ENCODE measurements at regions of chr7 and their contacts with region 1.

Region 1: DNA sequence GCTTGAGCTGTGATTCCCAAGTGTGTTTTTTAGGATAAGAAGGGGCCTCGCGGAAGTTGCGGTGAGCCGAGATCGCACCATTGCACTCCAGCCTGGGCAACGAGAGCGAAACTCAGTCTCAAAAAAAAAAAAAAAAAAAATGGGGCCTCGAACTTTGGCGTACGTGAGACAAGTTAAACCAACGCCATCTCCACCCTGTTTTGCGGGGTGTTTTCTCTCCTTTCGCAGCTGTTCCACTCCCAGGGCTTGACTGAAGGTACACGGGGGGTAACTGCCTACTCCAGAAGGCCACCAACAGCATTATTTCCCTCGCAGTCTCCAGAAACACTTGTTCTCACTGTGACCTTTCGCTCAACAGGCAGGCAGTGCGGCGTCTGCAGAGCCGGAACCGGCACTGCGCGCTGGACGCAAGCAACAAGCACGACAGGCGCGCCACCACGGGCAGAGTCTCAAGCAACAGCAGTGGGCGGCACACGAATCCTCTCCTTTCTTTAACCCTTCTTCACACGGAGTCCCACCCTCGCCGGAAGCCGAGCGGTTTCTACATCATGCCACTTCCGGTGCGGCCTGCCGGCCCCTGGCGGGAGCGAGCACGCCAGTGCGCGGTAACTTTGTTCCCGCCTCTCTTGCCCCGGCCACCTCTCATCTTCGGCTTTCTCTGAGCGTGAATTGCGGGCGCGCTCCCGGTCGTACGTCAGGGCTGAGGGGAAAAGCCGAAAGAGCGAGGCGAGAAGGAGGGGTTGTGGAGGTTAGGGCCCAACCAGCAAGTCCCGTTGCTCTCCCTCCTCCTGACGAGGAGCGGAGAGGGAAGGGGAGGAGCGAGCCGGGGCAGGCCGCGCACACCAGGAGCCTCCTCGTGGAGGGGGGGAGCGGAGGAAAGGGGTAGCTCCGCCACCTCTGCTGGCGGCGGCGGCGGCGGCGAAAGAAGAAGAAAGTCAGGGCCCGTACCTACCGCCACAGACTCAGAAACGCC is 814 bp upstream of the CDK13 start:
- DNase-seq: peak; percentile 98 to 99
- H3K4me3 ChIP-seq: peak overlapping the region; percentile 98 to 100
- H3K27ac ChIP-seq: peak overlapping the region; percentile 100
- H3K4me1 ChIP-seq: peaks cover 4 to 15% of the 10 kb centered on the region in 2 donors
- H3K27me3 ChIP-seq: no peaks in the 10 kb centered on the region
- CTCF ChIP-seq: no peak

Region 2: GRCh38 chr7:39623018-39623731 is 326.1 kb before region 1 on chr7 and contains the start of gene RALA:
- intact Hi-C with region 1: loop called (anchors 10 kb)
- DNase-seq: peak; percentile 73 to 94
- H3K4me3 ChIP-seq: peak within 1 kb of the TSS; percentile 93 to 97
- H3K27ac ChIP-seq: peak within 1 kb of the TSS; percentile 81 to 92
- H3K4me1 ChIP-seq: peaks cover 9 to 11% of the 10 kb centered on the region in 2 donors
- H3K27me3 ChIP-seq: no peaks in the 10 kb centered on the region
- CTCF ChIP-seq: no peak
- total RNA-seq, gene RALA: 6.0 TPM

Region 3: GRCh38 chr7:39650676-39651075 is 298.6 kb before region 1 on chr7:
- intact Hi-C with region 1: no loop called
- DNase-seq: peak in 1 of 2 donors; percentile 67
- H3K4me3 ChIP-seq: no peak overlapping the region
- H3K27ac ChIP-seq: no peak overlapping the region
- H3K4me1 ChIP-seq: peaks cover 0 to 2% of the 10 kb centered on the region in 2 donors
- H3K27me3 ChIP-seq: no peaks in the 10 kb centered on the region
- CTCF ChIP-seq: no peak

Region 4: DNA sequence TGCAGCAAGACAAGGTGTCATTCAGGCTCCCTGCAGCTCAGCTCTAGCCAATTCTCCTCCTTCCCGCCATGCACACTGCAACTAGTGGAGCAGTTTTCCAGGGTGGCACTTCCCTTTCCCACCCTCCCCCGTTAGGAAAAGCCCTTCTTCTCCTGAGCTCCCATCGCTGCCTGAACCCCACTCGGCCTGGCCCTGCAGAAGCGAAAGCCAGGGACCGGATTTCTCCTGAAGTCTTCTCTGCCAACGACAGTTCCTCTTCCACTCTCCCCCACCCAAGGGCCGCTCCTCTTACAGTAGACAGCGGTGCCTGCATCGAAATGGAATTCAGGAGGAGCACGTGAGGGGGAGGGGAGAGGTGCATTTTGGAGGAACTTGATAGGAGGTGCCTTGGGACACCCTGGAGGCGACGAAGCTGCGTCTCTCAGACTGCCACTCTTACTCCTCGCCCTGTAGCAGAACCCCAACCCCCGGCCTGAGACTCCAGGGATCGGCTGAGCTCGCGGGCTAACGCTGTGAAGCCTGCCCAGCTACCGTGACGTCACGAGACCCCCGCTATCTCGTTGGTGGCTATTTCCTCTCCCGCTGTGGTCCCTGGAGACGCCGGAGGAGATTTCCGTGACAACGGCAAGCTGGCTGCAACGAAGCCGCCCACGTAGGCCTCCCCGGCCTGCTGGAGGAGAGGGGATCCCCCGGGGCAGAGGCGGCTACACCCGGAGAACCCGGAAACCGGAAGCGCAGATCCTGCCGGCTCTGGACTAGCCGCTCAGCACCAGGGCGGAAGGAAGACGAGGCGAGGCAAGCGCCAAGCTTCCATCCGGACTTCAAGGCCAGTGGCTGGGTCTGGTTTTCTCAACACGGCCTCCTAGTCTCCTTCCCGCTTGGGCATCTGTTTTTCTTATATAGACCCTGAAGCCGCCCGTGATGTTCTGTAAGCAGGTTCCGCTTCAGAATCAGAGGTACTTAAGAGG is 216.1 kb before region 1 on chr7:
- intact Hi-C with region 1: loop called (anchors 5 kb)
- DNase-seq: peak; percentile 75 to 97
- H3K4me3 ChIP-seq: peak overlapping the region; percentile 66 to 76
- H3K27ac ChIP-seq: peak overlapping the region; percentile 78 to 81
- H3K4me1 ChIP-seq: peaks cover 0 to 9% of the 10 kb centered on the region in 2 donors
- H3K27me3 ChIP-seq: no peaks in the 10 kb centered on the region
- CTCF ChIP-seq: no peak

Region 5: DNA sequence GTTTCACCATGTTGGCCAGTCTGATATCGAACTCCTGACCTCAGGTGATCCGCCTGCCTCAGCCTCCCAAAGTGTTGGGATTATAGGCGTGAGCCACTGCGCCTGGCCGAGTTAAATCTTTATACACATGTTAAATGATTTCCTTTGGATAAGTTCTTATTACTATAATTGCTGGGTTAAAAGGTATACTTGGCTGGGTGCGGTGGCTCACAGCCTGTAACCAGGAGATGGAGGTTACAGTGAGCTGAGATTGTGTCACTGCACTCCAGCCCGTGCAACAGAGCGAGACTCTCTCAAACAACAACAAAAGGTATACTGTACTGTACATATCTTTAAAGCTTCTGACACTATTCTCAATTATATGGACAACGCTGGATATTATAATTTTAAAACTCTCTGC is 52.4 kb before region 1 on chr7:
- intact Hi-C with region 1: loop called (anchors 2 kb)
- DNase-seq: no peak
- H3K4me3 ChIP-seq: no peak overlapping the region
- H3K27ac ChIP-seq: no peak overlapping the region
- H3K4me1 ChIP-seq: no peaks in the 10 kb centered on the region
- H3K27me3 ChIP-seq: no peaks in the 10 kb centered on the region
- CTCF ChIP-seq: no peak

Region 6: DNA sequence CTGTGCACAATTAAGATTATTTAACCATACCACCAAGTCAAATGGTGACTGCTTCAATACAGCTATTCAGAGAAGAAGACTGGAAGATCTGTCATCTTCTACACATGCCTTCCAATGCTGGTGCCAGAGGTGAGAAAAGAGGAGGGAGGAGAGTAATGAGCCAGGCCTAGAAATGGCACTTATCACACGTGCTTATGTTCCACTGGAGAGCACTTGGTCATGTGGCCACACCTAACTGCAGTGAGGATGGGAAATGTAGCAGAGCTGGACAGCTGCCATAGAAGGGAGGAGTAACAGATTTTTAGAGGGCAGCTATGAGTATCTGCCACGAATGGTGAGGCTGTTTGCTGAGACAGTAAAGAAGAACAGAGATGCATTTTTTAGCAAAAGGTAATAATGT is 108.0 kb after region 1 on chr7:
- intact Hi-C with region 1: loop called (anchors 2 kb)
- DNase-seq: no peak
- H3K4me3 ChIP-seq: no peak overlapping the region
- H3K27ac ChIP-seq: no peak overlapping the region
- H3K4me1 ChIP-seq: no peaks in the 10 kb centered on the region
- H3K27me3 ChIP-seq: no peaks in the 10 kb centered on the region
- CTCF ChIP-seq: no peak

Region 7: DNA sequence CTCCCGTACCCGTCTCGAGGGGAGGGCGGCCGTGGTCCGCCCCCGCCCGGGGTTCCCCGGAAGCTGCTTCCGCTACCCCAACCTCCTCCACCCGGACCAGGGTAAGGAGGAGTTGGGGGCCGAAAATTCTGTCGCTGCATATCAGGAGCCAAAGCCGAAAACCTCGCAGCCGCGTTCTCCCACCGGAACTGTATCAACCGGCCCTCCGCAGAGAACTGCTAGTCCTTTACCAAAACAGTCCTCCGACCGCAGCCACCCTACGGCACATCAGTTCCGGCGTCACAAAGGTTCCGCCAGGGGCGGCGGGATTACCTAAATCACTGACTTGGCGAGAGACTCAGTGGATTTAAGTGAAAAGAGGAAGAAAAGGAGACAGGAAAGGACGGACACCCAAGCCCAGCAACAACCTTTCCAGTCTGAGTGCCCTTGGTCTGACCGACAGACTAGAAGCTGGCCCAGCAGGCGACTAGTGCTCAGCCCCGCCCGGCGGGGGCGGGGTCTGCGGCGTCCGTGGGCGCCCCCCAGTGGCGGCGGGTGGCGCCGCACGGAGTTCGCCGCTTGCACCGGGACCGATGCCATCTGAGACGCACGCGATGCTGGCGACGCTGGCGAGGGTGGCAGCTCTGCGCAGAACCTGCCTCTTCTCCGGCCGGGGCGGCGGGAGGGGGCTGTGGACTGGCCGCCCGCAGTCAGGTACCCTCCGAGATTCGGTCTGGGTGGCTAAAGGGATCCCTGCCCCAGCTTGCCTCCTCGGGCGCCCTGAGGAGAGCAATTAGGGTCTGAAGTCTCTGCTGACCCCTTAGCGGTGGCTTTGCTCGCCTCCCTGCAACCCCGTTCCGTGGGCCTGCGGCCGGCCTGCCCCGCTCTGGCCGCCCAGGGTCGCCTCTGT is 185.4 kb after region 1 on chr7 and contains the starts of genes MPLKIP and SUGCT:
- intact Hi-C with region 1: loop called (anchors 1 kb)
- DNase-seq: peak; percentile 30 to 90
- H3K4me3 ChIP-seq: peak within 1 kb of the TSS; percentile 70 to 89
- H3K27ac ChIP-seq: peak within 1 kb of the TSS; percentile 87 to 90
- H3K4me1 ChIP-seq: peaks cover 0 to 19% of the 10 kb centered on the region in 2 donors
- H3K27me3 ChIP-seq: no peaks in the 10 kb centered on the region
- CTCF ChIP-seq: peak; percentile 87 to 99 (median 97)
- total RNA-seq, gene MPLKIP: 55.5 TPM
- total RNA-seq, gene SUGCT: 9.8 TPM

Region 8: GRCh38 chr7:40551685-40552576 is 602.7 kb after region 1 on chr7:
- intact Hi-C with region 1: no loop called
- DNase-seq: no peak
- H3K4me3 ChIP-seq: no peak overlapping the region
- H3K27ac ChIP-seq: no peak overlapping the region
- H3K4me1 ChIP-seq: peaks cover 0 to 9% of the 10 kb centered on the region in 2 donors
- H3K27me3 ChIP-seq: no peaks in the 10 kb centered on the region
- CTCF ChIP-seq: no peak

Region 9: GRCh38 chr7:41705109-41705901 is 1756.1 kb after region 1 on chr7:
- intact Hi-C with region 1: loop called (anchors 10 kb)
- DNase-seq: peak; percentile 59 to 94
- H3K4me3 ChIP-seq: peak overlapping the region; percentile 60 to 65
- H3K27ac ChIP-seq: peak overlapping the region; percentile 83 to 88
- H3K4me1 ChIP-seq: peaks cover 0 to 22% of the 10 kb centered on the region in 2 donors
- H3K27me3 ChIP-seq: no peaks in the 10 kb centered on the region
- CTCF ChIP-seq: peak; percentile 62 to 80 (median 78)